ENCODE measurements at regions of chr15 and their contacts with region 1.

Region 1: DNA sequence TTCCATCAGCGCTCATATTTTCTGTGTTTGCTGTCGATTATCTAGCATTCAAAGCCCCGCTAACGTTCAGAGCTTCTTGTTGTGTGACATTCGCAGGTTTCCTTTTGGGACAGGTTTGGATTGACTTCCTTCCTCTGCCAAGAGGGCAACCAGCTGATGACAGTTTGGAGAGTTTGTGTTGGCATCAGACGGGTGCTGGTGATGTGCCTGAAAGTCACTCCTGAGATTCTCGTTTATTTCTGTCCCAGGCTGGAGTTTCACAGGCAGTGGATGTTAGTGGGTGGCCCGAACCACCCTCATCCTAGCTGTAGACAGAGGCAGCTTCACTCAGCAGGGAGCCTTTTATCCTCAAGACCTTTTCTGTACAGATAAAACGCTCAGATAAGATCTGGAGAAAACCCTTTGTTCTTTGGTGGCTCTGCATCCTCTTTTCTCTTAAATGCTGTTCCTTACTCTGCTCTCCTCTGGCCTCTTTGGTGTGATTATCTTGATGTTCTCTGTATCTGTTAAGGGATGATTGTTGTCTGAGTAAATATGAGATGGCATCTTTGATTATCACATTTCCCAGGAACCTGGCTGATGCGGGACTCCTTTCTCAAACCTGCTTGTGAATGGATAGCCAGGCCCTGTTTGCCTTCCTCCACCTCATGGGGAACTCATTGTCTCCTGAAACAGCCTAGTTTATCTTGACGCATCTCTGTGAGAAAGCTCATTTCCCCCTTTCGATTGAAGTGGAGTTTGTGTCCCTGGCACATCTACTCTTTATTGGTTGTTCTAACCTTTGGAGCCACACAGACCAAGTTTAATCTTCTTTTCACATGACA is 35.9 kb downstream of the CGNL1 start:
- DNase-seq: no peak
- H3K4me3 ChIP-seq: no peak overlapping the region
- H3K27ac ChIP-seq: no peak overlapping the region
- H3K4me1 ChIP-seq: peaks cover 0 to 6% (median 0%) of the 10 kb centered on the region in 4 experiments; a peak in 1 of 7 replicates
- H3K27me3 ChIP-seq: no peaks in the 10 kb centered on the region
- CTCF ChIP-seq: no peak
- EP300 ChIP-seq: no peak
- POLR2A ChIP-seq: no peak
- RAD21 ChIP-seq: no peak

Region 2: DNA sequence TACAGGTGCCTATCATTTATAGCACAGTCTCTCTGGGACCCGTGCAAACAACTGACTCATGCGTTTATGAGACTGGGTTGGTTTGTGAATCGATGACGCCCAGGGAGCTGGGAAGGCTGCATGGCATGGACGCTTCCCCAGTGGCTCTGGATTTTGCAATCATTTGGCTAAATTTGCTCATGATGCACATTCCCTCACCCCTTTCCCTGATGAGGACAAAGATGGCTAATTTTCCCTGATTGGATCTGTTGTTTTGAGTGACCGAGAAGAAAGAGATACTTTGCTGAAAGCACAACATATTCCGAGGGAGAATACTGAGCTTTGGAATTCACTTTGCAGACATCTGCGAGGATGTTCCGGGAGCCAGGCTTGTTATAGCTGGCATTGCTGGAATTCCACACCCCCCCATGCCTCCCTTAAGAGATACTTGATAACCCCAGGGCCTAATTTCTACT is 15.2 kb after region 1 on chr15:
- CTCF ChIA-PET with region 1: interaction called, 4 read pairs
- POLR2A ChIA-PET with region 1: interaction called, 19 read pairs
- DNase-seq: peak in 1 of 2 experiments; percentile 23
- H3K4me3 ChIP-seq: no peak overlapping the region
- H3K27ac ChIP-seq: no peak overlapping the region; the same call in 1 of the 2 replicates
- H3K4me1 ChIP-seq: peaks cover 9 to 27% (median 16%) of the 10 kb centered on the region in 4 experiments
- H3K27me3 ChIP-seq: no peaks in the 10 kb centered on the region
- CTCF ChIP-seq: no peak
- EP300 ChIP-seq: no peak
- POLR2A ChIP-seq: no peak
- RAD21 ChIP-seq: no peak

Measured in H1 (cell line).